ENCODE measurements at regions of chr7 and their contacts with region 1.

Region 1: GRCh38 chr7:135645296-135645904 is 16.9 kb upstream of the STMP1 start:
- DNase-seq: peak; percentile 48
- H3K4me3 Mint-ChIP-seq: no peak overlapping the region
- H3K27ac Mint-ChIP-seq: no peak overlapping the region
- H3K4me1 Mint-ChIP-seq: no peaks in the 10 kb centered on the region
- H3K27me3 Mint-ChIP-seq: no peaks in the 10 kb centered on the region

Region 2: GRCh38 chr7:135281363-135281949 is 363.9 kb before region 1 on chr7:
- CTCF ChIA-PET with region 1: interaction called, 10 read pairs
- POLR2A ChIA-PET with region 1: no interaction called
- DNase-seq: peak; percentile 88
- H3K4me3 Mint-ChIP-seq: no peak overlapping the region
- H3K27ac Mint-ChIP-seq: no peak overlapping the region
- H3K4me1 Mint-ChIP-seq: peaks cover 20% of the 10 kb centered on the region
- H3K27me3 Mint-ChIP-seq: peaks cover 6% of the 10 kb centered on the region

Region 3: DNA sequence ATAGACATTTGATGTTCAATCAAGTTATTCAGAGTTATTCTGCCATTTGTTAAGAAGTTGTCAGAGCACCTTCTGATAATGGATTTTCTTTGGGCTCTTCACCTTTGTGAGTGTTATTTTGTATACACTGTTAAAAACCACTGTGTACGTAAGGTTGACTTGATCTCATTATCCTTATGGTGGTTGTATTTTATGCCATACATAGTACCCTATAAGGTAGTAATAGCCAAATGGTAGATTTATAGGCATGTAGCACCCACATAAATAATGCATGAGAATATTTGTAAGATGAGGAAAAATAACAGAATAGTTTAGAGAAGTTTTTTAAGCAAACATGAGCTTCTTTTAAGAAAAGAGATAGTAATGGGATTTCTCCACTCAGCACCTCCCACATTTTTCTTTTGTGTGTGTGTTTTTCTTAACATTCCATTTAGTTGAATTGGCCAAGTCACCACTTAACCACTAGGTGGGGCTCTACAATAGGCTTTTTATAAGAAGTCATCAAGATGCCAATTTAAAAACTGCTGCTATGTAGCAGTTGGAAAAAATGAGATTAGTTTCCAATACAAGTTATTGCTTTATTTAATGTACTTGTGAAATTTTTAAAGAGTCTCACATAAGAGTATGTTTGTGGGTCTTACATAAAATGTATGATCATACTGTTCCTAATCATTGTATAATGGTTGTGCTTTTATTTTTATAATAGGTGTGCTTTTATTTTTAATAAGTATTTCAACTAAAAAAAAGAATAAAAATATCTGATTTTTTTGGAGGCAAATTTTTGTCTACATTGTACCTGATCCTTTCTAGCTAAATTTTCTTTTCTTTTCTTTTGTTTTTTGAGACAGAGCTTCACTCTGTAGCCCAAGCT is 24.2 kb before region 1 on chr7:
- CTCF ChIA-PET with region 1: interaction called, 10 read pairs
- POLR2A ChIA-PET with region 1: no interaction called
- DNase-seq: peak; percentile 42
- H3K4me3 Mint-ChIP-seq: no peak overlapping the region
- H3K27ac Mint-ChIP-seq: no peak overlapping the region
- H3K4me1 Mint-ChIP-seq: peaks cover 3% of the 10 kb centered on the region
- H3K27me3 Mint-ChIP-seq: no peaks in the 10 kb centered on the region

Region 4: GRCh38 chr7:135662373-135663114 is 17.1 kb after region 1 on chr7 and contains the start of gene STMP1:
- CTCF ChIA-PET with region 1: interaction called, 22 read pairs
- POLR2A ChIA-PET with region 1: no interaction called
- DNase-seq: peak; percentile 96
- H3K4me3 Mint-ChIP-seq: peak within 1 kb of the TSS; percentile 87
- H3K27ac Mint-ChIP-seq: peak within 1 kb of the TSS; percentile 88
- H3K4me1 Mint-ChIP-seq: peaks cover 30% of the 10 kb centered on the region
- H3K27me3 Mint-ChIP-seq: no peaks in the 10 kb centered on the region
- total RNA-seq, gene STMP1: 25.2 to 26.0 TPM

Measured in activated CD4-positive, alpha-beta T cell treated with anti-CD3 and anti-CD28 coated beads, Interleukin-2, amount 10 ng/mL, durations not matched to agents 7 days and 5 days (primary cell).